IMR-90 (cell line): ENCODE measurements at regions of chr14 and their contacts with region 1.

Region 1: DNA sequence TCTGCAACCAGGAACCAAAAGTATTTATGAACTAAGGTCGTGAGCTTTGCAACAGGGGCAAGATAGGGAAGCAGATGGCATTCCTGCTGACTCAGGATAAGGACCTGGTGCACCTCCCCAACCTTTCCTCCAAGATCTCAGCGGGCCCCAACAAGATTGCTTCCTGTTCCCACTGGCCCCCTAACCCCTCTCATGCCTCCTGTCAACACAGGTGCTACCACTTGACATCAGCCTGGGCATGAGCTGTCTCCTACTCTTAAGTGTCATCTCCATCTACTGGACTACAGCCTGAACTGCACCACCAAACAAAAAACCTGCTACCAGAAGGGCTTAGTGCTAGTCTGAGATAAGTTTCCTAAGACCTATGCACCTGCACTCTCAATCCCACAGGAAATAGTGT is 32.7 kb downstream of the MED6 start:
- DNase-seq: peak; percentile 39
- ATAC-seq: peak; percentile 93
- H3K4me3 ChIP-seq: no peak overlapping the region
- H3K27ac ChIP-seq: no peak overlapping the region
- H3K4me1 ChIP-seq: no peaks in the 10 kb centered on the region
- H3K27me3 ChIP-seq: no peaks in the 10 kb centered on the region
- CTCF ChIP-seq: peak; percentile 52
- POLR2A ChIP-seq: no peak
- RAD21 ChIP-seq: peak; percentile 59

Region 2: DNA sequence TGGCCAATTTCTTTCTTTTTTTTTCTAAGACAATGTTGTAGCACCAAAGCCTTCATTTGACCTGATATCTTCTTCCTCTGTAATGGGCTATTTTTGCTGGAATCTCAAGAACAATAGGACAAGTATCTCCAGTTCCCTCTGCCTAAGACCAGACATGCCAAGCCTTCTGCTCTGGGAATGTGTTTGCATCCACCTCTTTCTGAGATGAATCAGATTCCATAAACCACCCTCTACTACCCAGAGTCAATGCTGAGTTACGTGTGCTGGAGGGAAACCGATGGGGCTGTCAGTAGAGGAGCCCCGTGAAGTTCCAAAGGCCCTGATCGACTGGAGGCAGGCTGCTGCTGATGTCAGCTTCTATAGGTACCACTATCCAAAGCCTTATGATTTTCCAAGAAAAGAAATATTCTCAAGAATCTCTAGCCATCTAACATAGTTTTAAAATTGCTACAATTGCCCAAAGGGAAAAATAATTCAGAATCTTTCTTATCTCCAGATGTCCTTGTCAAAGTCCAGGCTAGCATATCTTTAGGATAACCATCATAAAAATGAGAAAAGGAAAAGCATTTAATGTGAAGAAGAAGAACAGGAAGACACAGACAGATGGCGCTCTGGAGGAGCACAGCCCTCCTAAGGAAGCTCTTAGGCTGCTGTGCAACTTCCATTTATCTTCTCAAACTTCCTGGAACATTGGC is 481.0 kb before region 1 on chr14:
- CTCF ChIA-PET with region 1: interaction called, 4 read pairs
- POLR2A ChIA-PET with region 1: no interaction called
- dilution Hi-C with region 1: no loop called
- in situ Hi-C with region 1: no loop called
- intact Hi-C with region 1: loop called (anchors 1 kb)
- DNase-seq: peak; percentile 54
- ATAC-seq: peak; percentile 60
- H3K4me3 ChIP-seq: no peak overlapping the region
- H3K27ac ChIP-seq: no peak overlapping the region
- H3K4me1 ChIP-seq: no peaks in the 10 kb centered on the region
- H3K27me3 ChIP-seq: no peaks in the 10 kb centered on the region
- CTCF ChIP-seq: peak; percentile 61
- POLR2A ChIP-seq: no peak
- RAD21 ChIP-seq: peak; percentile 57